Tibial artery (tissue), 4 donors: ENCODE measurements at regions of chr1 and their contacts with region 1.

Region 1: GRCh38 chr1:236830560-236830959 is 35.5 kb downstream of the MTR start:
- DNase-seq: peak in 1 of 2 donors; percentile 33
- H3K4me3 ChIP-seq: no peak overlapping the region
- H3K27ac ChIP-seq: no peak overlapping the region
- H3K4me1 ChIP-seq: no peaks in the 10 kb centered on the region
- H3K27me3 ChIP-seq: no peaks in the 10 kb centered on the region
- CTCF ChIP-seq: no peak

Region 2: GRCh38 chr1:236590553-236591150 is 239.9 kb before region 1 on chr1:
- intact Hi-C with region 1: loop called (anchors 10 kb)
- DNase-seq: no peak
- H3K4me3 ChIP-seq: no peak overlapping the region
- H3K27ac ChIP-seq: no peak overlapping the region
- H3K4me1 ChIP-seq: no peaks in the 10 kb centered on the region
- H3K27me3 ChIP-seq: no peaks in the 10 kb centered on the region
- CTCF ChIP-seq: no peak

Region 3: GRCh38 chr1:237032029-237032428 is 201.5 kb after region 1 on chr1:
- intact Hi-C with region 1: no loop called
- DNase-seq: peak in 1 of 2 donors; percentile 64
- H3K4me3 ChIP-seq: peak overlapping the region; percentile 38 to 47
- H3K27ac ChIP-seq: peak overlapping the region; percentile 83 to 88
- H3K4me1 ChIP-seq: peaks cover 0 to 72% (median 28%) of the 10 kb centered on the region in 4 donors
- H3K27me3 ChIP-seq: no peaks in the 10 kb centered on the region
- CTCF ChIP-seq: no peak